CD8-positive, alpha-beta T cell (primary cell): ENCODE measurements at regions of chr1 and their contacts with region 1.

Region 1: GRCh38 chr1:89274411-89274857 is 1.8 kb upstream of the GBP5 start:
- DNase-seq: peak in 2 of 9 experiments; percentile 68 to 81
- ATAC-seq: peak; percentile 39
- H3K4me3 ChIP-seq: peak overlapping the region in 1 of 2 experiments; percentile 0
- H3K4me3 Mint-ChIP-seq: peak overlapping the region; percentile 85
- H3K27ac ChIP-seq: peak overlapping the region; percentile 24 to 70
- H3K27ac Mint-ChIP-seq: peak overlapping the region; percentile 97
- H3K4me1 ChIP-seq: peaks cover 62% of the 10 kb centered on the region
- H3K4me1 Mint-ChIP-seq: peaks cover 85% of the 10 kb centered on the region
- H3K27me3 ChIP-seq: no peaks in the 10 kb centered on the region
- H3K27me3 Mint-ChIP-seq: no peaks in the 10 kb centered on the region
- CTCF ChIP-seq: no peak

Region 2: DNA sequence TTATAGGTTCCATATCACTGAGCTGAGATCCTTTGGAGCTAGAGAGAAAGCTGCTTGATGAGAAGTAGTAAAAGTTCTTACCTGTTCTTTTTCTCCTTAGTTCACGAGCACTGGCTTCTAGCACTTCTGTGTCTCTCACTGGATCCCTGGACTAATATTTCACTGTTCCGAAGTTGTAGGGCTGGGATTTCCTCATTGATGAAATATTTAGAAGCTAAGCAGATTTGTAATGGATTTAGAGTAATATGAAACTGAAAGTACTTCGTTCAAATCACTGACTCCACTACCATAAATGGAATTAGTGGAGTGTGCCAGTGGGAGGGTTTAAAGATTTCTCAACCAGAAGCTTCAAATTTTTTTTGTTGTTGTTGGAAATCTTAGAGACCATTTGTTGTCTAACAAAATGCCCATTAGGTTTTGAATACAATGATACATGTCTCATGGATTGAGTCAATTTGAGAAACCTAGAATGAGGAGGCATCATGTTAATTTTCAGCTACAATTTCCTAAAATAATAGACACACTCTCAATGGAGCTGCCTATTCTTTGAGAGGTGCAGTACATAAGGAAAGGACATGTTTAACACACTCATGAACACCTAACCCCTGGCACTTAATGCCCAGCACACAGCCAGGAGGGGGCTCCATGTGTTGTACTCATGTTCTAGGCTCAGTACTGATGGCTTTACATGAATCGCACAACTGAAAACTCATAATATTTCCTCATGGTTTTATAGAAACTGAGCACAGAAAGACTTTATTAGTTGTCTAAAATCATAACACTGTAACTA is 209.2 kb before region 1 on chr1 and contains the start of gene GBP1:
- CTCF ChIA-PET with region 1: no interaction called
- POLR2A ChIA-PET with region 1: interaction called, 3 read pairs
- intact Hi-C with region 1: loop called in 1 of 2 experiments (anchors 5 kb)
- DNase-seq: peak in 2 of 9 experiments; percentile 63 to 78
- ATAC-seq: peak; percentile 85
- H3K4me3 ChIP-seq: peak within 1 kb of the TSS; percentile 60 to 68
- H3K4me3 Mint-ChIP-seq: peak within 1 kb of the TSS; percentile 98
- H3K27ac ChIP-seq: peak within 1 kb of the TSS; percentile 65 to 80
- H3K27ac Mint-ChIP-seq: peak within 1 kb of the TSS; percentile 98
- H3K4me1 ChIP-seq: peaks cover 35% of the 10 kb centered on the region
- H3K4me1 Mint-ChIP-seq: peaks cover 63% of the 10 kb centered on the region
- H3K27me3 ChIP-seq: no peaks in the 10 kb centered on the region
- H3K27me3 Mint-ChIP-seq: no peaks in the 10 kb centered on the region
- CTCF ChIP-seq: no peak
- total RNA-seq, gene GBP1: 20.8 to 25.9 TPM

Region 3: DNA sequence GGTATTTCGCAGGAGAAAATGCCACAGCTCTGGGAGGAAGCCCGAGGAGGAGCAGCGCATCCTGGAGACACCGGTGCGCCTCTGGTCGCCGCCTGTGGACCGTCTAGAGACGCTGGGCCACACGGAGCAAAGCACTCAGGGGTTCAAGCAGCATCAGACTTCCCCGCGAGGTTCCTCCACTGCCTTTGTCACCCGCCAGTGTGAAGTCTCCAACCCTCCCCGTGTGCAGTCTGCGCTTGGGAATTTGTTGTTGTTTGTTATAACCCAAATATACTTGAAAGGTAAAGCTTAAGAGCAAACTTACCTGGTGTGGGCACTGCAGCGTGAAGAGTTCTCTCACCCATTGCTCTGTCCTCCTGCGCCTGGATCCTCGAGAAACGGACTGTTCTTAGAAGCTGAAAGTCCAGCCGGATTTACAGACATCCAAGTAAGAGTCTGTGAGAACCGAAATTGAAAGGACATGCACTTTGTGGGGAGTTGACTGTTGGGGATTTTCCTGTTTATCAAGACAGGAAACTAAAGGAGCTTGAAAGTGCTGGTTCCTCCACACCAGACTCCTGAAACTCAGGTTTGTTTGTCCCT is 75.9 kb before region 1 on chr1 and contains the start of gene GBP4:
- CTCF ChIA-PET with region 1: interaction called, 3 read pairs
- POLR2A ChIA-PET with region 1: interaction called, 7 read pairs
- intact Hi-C with region 1: loop called (anchors 5 kb)
- DNase-seq: peak in 8 of 9 experiments; percentile 31 to 84 (median 55)
- ATAC-seq: peak; percentile 50
- H3K4me3 ChIP-seq: peak within 1 kb of the TSS; percentile 70 to 87
- H3K4me3 Mint-ChIP-seq: peak within 1 kb of the TSS; percentile 95
- H3K27ac ChIP-seq: peak within 1 kb of the TSS; percentile 80 to 86
- H3K27ac Mint-ChIP-seq: peak within 1 kb of the TSS; percentile 93
- H3K4me1 ChIP-seq: peaks cover 57% of the 10 kb centered on the region
- H3K4me1 Mint-ChIP-seq: peaks cover 68% of the 10 kb centered on the region
- H3K27me3 ChIP-seq: no peaks in the 10 kb centered on the region
- H3K27me3 Mint-ChIP-seq: no peaks in the 10 kb centered on the region
- CTCF ChIP-seq: no peak
- total RNA-seq, gene GBP4: 16.6 to 17.5 TPM

Region 4: GRCh38 chr1:89286549-89287180 is 12.2 kb after region 1 on chr1:
- CTCF ChIA-PET with region 1: interaction called, 4 read pairs
- POLR2A ChIA-PET with region 1: interaction called, 50 read pairs
- intact Hi-C with region 1: loop called in 1 of 2 experiments (anchors 1 kb)
- DNase-seq: peak in 2 of 9 experiments; percentile 33 to 63
- ATAC-seq: peak; percentile 70
- H3K4me3 ChIP-seq: peak overlapping the region; percentile 25 to 30
- H3K4me3 Mint-ChIP-seq: peak overlapping the region; percentile 74
- H3K27ac ChIP-seq: peak overlapping the region; percentile 26 to 75
- H3K27ac Mint-ChIP-seq: peak overlapping the region; percentile 90
- H3K4me1 ChIP-seq: peaks cover 48% of the 10 kb centered on the region
- H3K4me1 Mint-ChIP-seq: peaks cover 61% of the 10 kb centered on the region
- H3K27me3 ChIP-seq: no peaks in the 10 kb centered on the region
- H3K27me3 Mint-ChIP-seq: no peaks in the 10 kb centered on the region
- CTCF ChIP-seq: no peak

Region 5: DNA sequence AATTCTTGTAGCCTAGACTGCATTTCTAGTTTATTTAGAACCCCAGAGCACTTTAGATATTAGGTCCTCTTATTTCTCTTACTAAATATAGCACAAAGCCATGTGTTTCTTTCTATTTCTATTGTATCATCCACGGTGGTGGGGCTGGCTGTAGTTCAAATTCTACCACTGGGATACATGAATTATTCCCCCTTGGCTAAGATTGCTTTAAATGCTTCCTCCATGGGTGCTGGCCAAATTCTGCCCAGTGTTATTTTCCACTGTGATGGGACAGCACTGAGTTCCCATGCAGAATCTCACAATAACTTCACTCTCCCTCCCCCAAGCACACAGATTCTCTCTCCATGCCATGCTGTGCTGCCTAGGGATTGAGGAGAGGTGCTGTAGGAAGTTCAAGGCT is 48.0 kb after region 1 on chr1:
- CTCF ChIA-PET with region 1: no interaction called
- POLR2A ChIA-PET with region 1: no interaction called
- intact Hi-C with region 1: no loop called
- DNase-seq: no peak
- ATAC-seq: no peak
- H3K4me3 ChIP-seq: no peak overlapping the region
- H3K4me3 Mint-ChIP-seq: no peak overlapping the region
- H3K27ac ChIP-seq: no peak overlapping the region
- H3K27ac Mint-ChIP-seq: no peak overlapping the region
- H3K4me1 ChIP-seq: no peaks in the 10 kb centered on the region
- H3K4me1 Mint-ChIP-seq: peaks cover 3% of the 10 kb centered on the region
- H3K27me3 ChIP-seq: no peaks in the 10 kb centered on the region
- H3K27me3 Mint-ChIP-seq: no peaks in the 10 kb centered on the region
- CTCF ChIP-seq: no peak

Region 6: DNA sequence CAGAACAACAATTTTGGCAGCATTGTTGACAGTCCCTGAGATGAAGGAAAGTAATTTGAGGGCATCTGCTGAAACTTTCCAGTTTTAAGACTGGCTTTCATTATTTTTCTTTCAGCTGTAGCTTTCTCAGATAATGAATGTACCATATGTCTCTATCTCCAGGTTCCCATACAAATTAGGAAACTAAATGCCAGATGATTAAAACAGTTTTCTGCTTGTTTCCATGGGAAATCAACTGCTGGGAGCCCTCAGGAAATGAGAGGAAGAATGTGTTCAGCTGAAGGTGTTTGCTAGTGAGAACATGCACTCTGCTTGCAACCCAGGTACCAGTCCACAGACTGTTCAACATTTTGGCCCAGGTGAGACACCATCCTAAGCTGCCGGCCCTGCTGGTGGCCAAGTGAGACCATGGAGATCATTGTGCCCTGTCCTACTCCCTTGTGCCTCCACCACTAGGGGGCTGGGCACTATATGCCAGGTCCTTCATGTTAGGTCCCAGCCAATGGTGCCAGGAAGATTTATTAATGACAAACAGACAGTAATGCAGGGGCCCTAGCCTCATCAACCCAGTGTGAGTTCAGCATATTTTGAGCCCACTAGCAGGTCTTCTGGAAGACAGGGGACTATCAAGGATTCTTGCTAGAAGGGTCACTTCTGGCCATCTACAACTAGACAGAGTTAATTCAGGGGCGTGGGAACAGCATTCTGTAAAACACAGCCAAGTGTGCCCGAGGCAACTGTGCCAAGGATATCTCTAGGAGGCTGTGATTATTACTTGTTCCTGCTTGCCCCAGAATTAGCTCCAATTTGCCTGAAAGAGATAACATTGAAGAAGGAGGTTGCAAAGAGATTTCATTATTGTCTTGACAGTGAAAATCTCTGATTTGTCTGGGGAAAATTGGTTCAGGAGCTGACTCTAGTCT is 341.5 kb after region 1 on chr1:
- CTCF ChIA-PET with region 1: no interaction called
- POLR2A ChIA-PET with region 1: no interaction called
- intact Hi-C with region 1: loop called in 1 of 2 experiments (anchors 10 kb)
- DNase-seq: peak in 3 of 9 experiments; percentile 27 to 59 (median 49)
- ATAC-seq: no peak
- H3K4me3 ChIP-seq: no peak overlapping the region
- H3K4me3 Mint-ChIP-seq: no peak overlapping the region
- H3K27ac ChIP-seq: no peak overlapping the region
- H3K27ac Mint-ChIP-seq: no peak overlapping the region
- H3K4me1 ChIP-seq: peaks cover 43% of the 10 kb centered on the region
- H3K4me1 Mint-ChIP-seq: peaks cover 73% of the 10 kb centered on the region
- H3K27me3 ChIP-seq: no peaks in the 10 kb centered on the region
- H3K27me3 Mint-ChIP-seq: no peaks in the 10 kb centered on the region
- CTCF ChIP-seq: no peak